ENCODE measurements at regions of chr2 and their contacts with region 1.

Region 1: DNA sequence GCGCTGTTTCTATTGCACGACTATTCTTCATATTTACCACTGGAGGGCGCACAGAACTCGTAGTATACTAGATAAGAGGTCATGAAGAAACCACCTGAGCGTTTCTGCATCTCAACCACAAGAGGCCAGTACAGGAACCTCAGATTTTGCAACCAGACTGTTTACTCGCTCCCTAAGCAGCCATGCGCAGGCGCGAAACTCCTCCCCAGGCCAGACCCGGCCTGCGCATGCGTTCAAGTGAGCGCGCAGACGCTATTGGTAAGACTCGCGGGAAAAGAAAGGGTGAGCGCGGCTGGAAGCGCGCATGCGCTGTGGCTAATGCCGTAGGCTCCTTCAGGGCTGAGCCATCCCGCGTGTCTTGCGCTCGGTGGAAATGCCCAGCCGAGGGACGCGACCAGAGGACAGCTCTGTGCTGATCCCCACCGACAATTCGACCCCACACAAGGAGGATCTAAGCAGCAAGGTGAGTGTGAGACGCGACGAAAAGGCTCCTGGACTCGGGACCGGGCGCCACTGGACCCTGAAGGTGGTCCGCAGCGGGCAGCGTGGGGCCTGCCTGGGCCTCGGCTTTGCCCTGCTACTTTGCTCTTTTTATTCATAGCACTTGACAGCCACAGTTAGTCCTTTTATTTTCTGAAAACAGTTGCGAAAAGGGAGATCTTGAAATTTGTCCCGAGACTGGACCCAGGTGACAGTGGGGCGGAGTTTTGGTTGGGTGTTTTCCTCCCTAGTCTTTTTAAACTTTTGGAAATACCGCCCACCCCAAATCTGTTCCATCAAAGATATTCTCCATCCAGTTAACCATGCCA is at the start of gene ASNSD1:
- DNase-seq: peak; percentile 99
- ATAC-seq: peak; percentile 86
- H3K4me3 Mint-ChIP-seq: no peak within 1 kb of the TSS
- H3K27ac Mint-ChIP-seq: no peak within 1 kb of the TSS
- H3K4me1 Mint-ChIP-seq: peaks cover 46% of the 10 kb centered on the region
- H3K27me3 Mint-ChIP-seq: no peaks in the 10 kb centered on the region
- total RNA-seq, gene ASNSD1: 50.9 to 58.4 TPM

Region 2: DNA sequence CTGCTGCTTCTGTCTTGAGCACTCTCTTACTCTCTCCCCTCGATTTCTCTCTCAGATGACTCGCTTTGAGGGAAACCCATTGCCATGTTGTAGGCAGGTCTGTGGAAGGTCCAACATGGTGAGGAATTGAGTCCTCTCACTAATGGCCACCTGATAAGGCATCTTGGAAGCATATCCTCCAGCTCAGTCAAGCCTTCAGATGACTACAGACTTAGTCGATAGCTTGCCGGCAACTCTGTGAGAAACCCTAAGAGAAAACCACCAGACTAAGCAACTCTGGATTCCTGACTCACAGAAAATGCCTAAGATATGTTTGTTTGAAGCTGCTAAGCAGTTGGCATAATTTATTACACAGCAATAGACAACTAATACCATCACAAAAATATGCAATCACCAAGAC is 168.9 kb before region 1 on chr2:
- CTCF ChIA-PET with region 1: no interaction called
- POLR2A ChIA-PET with region 1: no interaction called
- intact Hi-C with region 1: no loop called
- DNase-seq: no peak
- ATAC-seq: no peak
- H3K4me3 Mint-ChIP-seq: no peak overlapping the region
- H3K27ac Mint-ChIP-seq: no peak overlapping the region
- H3K4me1 Mint-ChIP-seq: no peaks in the 10 kb centered on the region
- H3K27me3 Mint-ChIP-seq: peaks cover 3% of the 10 kb centered on the region

Region 3: GRCh38 chr2:189641590-189641989 is 19.8 kb before region 1 on chr2:
- CTCF ChIA-PET with region 1: interaction called, 7 read pairs
- POLR2A ChIA-PET with region 1: interaction called, 4 read pairs
- intact Hi-C with region 1: loop called (anchors 1 kb)
- DNase-seq: peak; percentile 74
- ATAC-seq: peak; percentile 97
- H3K4me3 Mint-ChIP-seq: no peak overlapping the region
- H3K27ac Mint-ChIP-seq: peak overlapping the region; percentile 52
- H3K4me1 Mint-ChIP-seq: peaks cover 27% of the 10 kb centered on the region
- H3K27me3 Mint-ChIP-seq: no peaks in the 10 kb centered on the region

Region 4: DNA sequence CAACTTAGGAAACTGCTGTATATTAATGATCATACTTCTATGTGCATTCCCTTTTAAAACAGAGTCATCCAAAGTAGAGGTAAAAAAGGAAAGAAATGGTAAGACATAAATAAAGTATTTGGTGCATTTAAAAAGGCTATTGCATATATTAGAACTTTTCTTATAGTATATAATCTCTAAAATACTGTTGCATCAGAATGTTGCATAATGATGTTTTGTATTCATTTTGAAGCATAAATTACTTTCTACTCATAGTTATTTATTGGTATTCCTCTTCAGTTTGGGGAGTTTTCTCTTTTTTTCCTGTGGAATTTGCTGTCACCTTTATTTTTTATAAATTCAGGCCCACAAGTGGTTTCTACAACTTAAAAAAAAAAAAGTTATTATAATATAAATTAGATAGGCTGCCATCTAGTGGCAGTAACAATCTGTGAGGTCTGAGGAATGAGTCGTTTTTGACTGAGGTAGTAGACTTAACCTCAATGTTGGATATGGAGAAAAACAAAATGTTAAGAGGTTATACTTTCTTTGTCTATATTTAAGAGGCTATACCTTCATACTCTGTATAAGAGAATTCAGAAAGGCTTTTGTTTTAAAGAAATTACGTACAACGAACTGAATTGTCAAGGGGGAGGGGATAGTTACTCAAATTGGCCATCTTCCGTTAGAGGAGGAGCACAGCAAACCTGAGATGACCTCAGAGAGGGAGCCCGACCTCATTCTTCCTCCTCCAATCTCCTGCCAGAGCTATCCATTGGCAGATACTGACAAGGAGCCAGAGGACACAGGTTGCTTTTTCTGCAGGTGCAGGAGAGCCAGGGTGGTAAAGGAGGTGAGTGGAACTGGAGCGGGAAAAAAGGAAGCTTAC is 36.9 kb after region 1 on chr2:
- CTCF ChIA-PET with region 1: interaction called, 61 read pairs
- POLR2A ChIA-PET with region 1: no interaction called
- intact Hi-C with region 1: loop called (anchors 1 kb)
- DNase-seq: peak; percentile 40
- ATAC-seq: peak; percentile 72
- H3K4me3 Mint-ChIP-seq: no peak overlapping the region
- H3K27ac Mint-ChIP-seq: no peak overlapping the region
- H3K4me1 Mint-ChIP-seq: peaks cover 3% of the 10 kb centered on the region
- H3K27me3 Mint-ChIP-seq: no peaks in the 10 kb centered on the region

Region 5: GRCh38 chr2:189762551-189763298 is 101.4 kb after region 1 on chr2 and contains the start of gene OSGEPL1:
- CTCF ChIA-PET with region 1: interaction called, 49 read pairs
- POLR2A ChIA-PET with region 1: no interaction called
- intact Hi-C with region 1: loop called (anchors 1 kb)
- DNase-seq: peak; percentile 96
- ATAC-seq: peak; percentile 97
- H3K4me3 Mint-ChIP-seq: peak within 1 kb of the TSS; percentile 89
- H3K27ac Mint-ChIP-seq: peak within 1 kb of the TSS; percentile 96
- H3K4me1 Mint-ChIP-seq: peaks cover 15% of the 10 kb centered on the region
- H3K27me3 Mint-ChIP-seq: no peaks in the 10 kb centered on the region
- total RNA-seq, gene OSGEPL1: 9.8 to 11.6 TPM

Region 6: DNA sequence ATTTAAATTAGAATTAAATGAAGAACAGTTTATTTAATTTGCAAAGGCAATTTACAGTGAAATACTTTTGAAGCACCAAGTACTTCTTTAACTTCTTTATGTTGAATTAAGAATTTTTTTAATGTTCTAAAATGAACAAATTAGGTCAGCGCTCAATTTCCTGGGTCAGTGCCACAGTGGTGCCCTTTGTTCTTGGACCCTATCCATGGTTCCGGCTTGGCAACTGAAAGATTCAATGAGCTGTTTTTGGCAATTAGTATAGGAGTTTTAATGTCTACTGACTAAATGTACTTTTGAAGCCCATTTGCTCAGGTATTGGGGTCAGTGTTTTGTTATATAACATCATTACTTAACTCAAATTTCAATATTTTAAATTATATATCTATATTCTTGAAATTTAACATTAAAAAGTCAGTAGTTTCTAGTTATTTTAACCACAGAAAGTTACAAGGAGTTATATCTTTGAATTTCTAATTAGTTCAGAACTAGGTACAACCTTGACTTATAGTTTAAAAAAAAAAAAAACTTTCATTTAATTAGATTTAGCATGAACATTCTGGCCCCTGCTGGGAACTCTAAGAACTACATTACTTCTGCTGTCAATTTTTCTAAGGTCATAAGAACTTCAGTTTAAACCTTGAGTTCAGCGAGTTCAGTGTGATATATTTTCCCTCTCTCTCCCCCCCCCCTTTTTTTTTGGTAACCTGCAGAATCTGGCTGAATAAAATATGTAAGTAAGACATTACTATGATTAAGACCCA is 408.8 kb after region 1 on chr2:
- CTCF ChIA-PET with region 1: no interaction called
- POLR2A ChIA-PET with region 1: no interaction called
- intact Hi-C with region 1: loop called (anchors 1 to 5 kb)
- DNase-seq: peak; percentile 42
- ATAC-seq: no peak
- H3K4me3 Mint-ChIP-seq: no peak overlapping the region
- H3K27ac Mint-ChIP-seq: no peak overlapping the region
- H3K4me1 Mint-ChIP-seq: no peaks in the 10 kb centered on the region
- H3K27me3 Mint-ChIP-seq: no peaks in the 10 kb centered on the region

Region 7: GRCh38 chr2:190197143-190197720 is 535.9 kb after region 1 on chr2:
- CTCF ChIA-PET with region 1: no interaction called
- POLR2A ChIA-PET with region 1: no interaction called
- intact Hi-C with region 1: no loop called
- DNase-seq: no peak
- ATAC-seq: no peak
- H3K4me3 Mint-ChIP-seq: no peak overlapping the region
- H3K27ac Mint-ChIP-seq: no peak overlapping the region
- H3K4me1 Mint-ChIP-seq: no peaks in the 10 kb centered on the region
- H3K27me3 Mint-ChIP-seq: no peaks in the 10 kb centered on the region

Region 8: DNA sequence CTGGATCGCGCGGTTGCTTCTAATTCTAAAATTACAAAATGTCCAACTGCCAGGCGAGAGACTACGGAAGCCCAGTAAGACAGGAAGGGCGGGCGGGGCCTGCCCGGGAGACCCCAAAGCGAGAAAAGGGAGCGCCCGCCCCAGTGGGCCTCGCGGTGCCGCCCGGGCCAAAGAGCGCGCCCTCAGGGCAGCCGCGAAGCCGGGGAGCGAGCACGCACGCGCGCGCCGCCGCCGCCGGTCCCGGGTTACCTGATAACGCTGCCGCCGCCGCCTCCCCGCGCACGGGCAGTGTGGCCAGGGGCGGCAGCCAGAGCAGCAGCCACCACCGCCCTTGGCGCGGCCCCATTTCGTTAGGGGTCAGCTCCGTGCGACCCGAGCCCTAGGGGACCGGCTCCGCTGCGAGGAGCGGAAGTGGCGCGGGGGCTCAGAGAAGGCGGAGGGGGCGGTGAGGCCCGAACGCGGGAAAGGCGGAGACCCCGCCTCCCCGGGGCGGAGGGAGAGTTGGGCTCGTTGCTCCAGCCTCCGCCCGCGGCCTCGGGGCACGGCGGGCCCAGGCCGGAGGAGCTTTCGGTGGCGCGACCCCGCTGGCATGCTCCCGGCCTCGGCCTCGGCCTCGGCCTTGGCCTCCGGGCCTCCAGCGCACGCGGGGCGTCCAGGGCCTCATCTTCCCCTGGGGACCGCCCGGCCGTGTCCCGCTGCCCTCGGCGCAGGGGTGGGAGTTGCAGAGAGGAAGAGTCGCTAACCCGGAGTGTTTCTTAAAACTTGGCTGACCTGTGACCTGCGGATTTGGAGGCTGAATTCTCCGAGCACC is 873.2 kb after region 1 on chr2 and contains the start of gene NEMP2:
- CTCF ChIA-PET with region 1: no interaction called
- POLR2A ChIA-PET with region 1: no interaction called
- intact Hi-C with region 1: loop called in 1 of 2 experiments (anchors 10 kb)
- DNase-seq: peak; percentile 87
- ATAC-seq: peak; percentile 70
- H3K4me3 Mint-ChIP-seq: peak within 1 kb of the TSS; percentile 95
- H3K27ac Mint-ChIP-seq: peak within 1 kb of the TSS; percentile 98
- H3K4me1 Mint-ChIP-seq: peaks cover 52% of the 10 kb centered on the region
- H3K27me3 Mint-ChIP-seq: no peaks in the 10 kb centered on the region
- total RNA-seq, gene NEMP2: 24.6 to 25.1 TPM

Region 9: DNA sequence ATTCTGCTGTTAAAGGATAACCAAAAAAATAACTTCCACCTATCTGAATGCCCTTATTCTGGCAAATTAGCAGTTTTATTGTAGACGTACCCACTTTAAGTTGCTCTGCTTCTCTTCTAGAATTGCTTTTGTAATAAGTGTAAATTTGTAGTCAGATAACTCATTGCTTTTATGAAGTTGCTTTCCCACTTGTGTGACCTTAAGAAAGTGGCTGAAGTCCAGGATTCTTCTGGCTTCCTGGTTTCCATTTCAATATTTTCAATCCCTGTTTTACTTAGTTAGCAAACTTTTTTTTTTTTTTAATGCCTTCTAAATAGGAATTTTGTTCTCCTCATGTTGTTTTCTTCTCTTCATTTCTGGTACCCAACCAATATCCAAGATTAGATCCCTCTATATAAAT is 1279.1 kb after region 1 on chr2:
- CTCF ChIA-PET with region 1: no interaction called
- POLR2A ChIA-PET with region 1: no interaction called
- intact Hi-C with region 1: no loop called
- DNase-seq: no peak
- ATAC-seq: no peak
- H3K4me3 Mint-ChIP-seq: no peak overlapping the region
- H3K27ac Mint-ChIP-seq: no peak overlapping the region
- H3K4me1 Mint-ChIP-seq: peaks cover 7% of the 10 kb centered on the region
- H3K27me3 Mint-ChIP-seq: no peaks in the 10 kb centered on the region

Measured in activated CD4-positive, alpha-beta T cell treated with anti-CD3 and anti-CD28 coated beads for 36 hours (primary cell).